ENCODE measurements at regions of chr9 and their contacts with region 1.

Region 1: DNA sequence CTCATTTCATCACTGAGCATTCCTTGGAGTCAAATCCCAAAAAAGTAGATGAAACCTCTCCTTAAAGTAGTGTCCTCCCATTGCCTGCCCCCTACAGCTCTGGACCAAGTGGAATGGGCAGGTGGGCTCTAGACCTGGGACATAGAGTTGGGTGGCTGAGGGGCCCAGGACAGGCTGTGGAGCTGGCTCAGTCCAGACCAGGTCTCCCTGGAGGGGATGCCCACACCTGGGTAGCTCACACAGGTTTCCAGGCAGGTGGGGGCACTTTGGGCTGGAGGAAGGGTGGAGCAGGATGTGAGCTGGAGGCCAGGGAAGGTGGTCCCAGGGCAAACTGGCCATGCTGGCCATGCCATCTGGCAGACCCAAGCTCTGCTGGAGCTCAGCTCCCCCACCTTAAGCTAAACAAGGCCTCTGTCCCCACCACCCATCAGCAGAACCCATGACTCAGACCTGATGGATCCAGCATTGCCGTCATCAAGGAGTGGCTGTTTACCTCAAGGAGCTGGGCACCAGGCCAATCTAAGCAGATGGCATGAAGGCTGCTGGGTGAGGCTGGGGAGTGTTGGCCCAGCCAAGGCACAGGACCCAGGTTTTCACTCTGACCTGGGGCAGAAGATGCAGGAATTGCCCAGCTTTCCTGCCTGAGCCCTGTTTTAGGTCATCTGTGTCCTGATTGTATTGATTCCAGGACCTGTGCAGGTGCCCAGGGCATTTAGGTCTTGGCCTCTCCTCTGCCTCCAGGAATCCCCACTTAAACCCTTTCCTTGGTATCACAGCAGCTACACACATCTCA is 6.1 kb upstream of the SPINK4 start:
- DNase-seq: no peak
- CTCF ChIP-seq: no peak

Region 2: GRCh38 chr9:33244137-33244784 is 10.4 kb after region 1 on chr9:
- CTCF ChIA-PET with region 1: interaction called, 29 read pairs
- POLR2A ChIA-PET with region 1: interaction called, 3 read pairs
- DNase-seq: no peak
- CTCF ChIP-seq: no peak

Region 3: GRCh38 chr9:33285502-33285901 is 51.6 kb after region 1 on chr9:
- CTCF ChIA-PET with region 1: no interaction called
- POLR2A ChIA-PET with region 1: no interaction called
- DNase-seq: no peak
- CTCF ChIP-seq: no peak